ENCODE measurements at regions of chr11 and their contacts with region 1.

Region 1: DNA sequence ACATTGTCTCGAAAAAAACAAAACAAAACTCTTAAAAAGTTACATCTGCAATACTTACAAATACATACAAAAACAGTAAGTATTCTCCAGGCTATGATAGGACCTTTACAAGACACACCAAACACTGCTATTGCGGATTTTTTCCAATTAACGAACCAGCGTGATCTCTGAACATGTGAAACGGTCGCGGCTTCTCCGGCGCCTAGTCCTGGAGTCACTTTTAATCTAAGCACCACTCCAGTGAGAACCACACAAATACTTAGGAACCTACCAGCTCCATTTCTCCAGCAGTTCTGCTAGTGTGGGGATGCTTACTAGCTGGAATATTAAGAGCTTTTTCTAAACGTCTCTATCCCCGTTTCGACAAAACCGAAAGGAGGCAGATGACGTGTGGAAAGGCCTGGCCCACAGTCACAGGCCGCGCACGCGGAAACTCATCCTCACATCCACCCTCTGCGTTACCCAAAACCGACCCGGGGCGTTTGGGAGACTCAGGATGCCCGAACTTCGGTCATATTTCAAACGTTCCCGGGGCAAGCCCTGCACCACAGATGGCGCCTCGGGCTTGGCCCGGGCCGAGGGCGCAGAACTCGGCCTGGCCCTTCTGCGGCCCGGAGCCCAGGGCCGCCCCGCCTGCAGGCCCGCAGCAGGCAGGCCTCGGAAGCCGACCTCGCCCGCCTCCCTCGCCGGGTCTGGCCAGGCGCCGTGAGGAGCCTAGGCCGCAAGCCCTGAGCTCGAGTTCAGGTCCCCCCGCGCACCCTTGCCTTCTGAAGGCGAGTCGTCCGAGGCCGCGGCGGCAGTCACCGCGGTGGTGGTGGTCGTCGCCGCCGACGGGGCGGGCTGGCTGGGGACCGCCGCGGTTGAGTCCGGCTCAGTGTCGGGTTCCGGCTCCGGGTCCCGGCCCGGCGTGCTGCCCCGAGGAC is 575 bp downstream of the FNBP4 start:
- DNase-seq: peak; percentile 56 to 90 (median 68)
- ATAC-seq: peak; percentile 38
- H3K4me3 ChIP-seq: peak overlapping the region; percentile 89
- H3K4me3 Mint-ChIP-seq: peak overlapping the region; percentile 98
- H3K27ac ChIP-seq: peak overlapping the region; percentile 97 to 98
- H3K27ac Mint-ChIP-seq: peak overlapping the region; percentile 99
- H3K4me1 ChIP-seq: peaks cover 35% of the 10 kb centered on the region
- H3K4me1 Mint-ChIP-seq: peaks cover 34% of the 10 kb centered on the region
- H3K27me3 ChIP-seq: no peaks in the 10 kb centered on the region
- H3K27me3 Mint-ChIP-seq: no peaks in the 10 kb centered on the region
- CTCF ChIP-seq: no peak

Region 2: DNA sequence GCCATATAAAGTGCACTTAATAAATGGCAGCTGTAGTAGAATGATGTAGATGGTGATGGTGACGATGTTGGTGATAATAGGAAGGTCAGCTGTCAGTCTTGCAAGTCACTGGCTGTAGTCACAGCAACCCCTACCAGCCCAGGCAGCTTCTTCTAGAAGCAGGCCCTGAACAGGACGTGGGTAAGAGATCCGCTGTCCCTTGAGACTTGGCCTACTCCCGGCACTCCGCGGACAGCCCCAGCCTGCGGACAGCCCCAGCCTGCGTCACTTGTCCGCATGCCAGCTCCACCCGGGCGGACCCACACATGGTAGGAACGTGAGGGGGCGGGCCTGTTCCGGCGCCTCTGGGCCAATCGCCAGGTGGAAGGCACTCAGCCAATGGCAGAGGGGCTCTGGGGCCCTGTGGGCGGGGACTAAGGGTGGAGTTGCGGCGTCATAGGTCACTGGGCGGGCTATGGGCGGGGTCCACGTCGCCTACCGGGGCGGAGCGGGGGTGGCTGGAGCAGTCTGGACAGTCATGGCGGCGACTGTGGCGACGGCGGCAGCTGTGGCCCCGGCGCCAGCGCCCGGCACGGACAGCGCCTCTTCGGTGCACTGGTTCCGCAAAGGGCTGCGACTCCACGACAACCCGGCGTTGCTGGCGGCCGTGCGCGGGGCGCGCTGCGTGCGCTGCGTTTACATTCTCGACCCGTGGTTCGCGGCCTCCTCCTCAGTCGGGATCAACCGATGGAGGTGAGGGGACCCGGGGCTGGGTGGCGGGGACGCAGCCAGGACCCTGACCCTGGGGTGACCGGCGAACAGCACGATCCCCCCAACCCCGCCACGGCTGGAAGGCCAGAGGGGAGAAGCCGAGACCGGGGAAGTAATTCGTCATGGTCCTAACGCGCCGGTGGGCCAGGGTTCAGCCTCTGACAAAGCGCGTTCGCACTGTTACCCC is 1919.3 kb before region 1 on chr11 and contains the start of gene CRY2:
- CTCF ChIA-PET with region 1: no interaction called
- POLR2A ChIA-PET with region 1: no interaction called
- intact Hi-C with region 1: loop called in 1 of 2 experiments (anchors 5 kb)
- DNase-seq: peak; percentile 95 to 99 (median 98)
- ATAC-seq: peak; percentile 77
- H3K4me3 ChIP-seq: peak within 1 kb of the TSS; percentile 94
- H3K4me3 Mint-ChIP-seq: peak within 1 kb of the TSS; percentile 96
- H3K27ac ChIP-seq: peak within 1 kb of the TSS; percentile 91 to 93
- H3K27ac Mint-ChIP-seq: peak within 1 kb of the TSS; percentile 100
- H3K4me1 ChIP-seq: peaks cover 41% of the 10 kb centered on the region
- H3K4me1 Mint-ChIP-seq: peaks cover 70% of the 10 kb centered on the region
- H3K27me3 ChIP-seq: no peaks in the 10 kb centered on the region
- H3K27me3 Mint-ChIP-seq: no peaks in the 10 kb centered on the region
- CTCF ChIP-seq: no peak
- total RNA-seq, gene CRY2: 248 TPM

Region 3: GRCh38 chr11:47407746-47408590 is 358.6 kb before region 1 on chr11 and contains the start of gene SLC39A13:
- CTCF ChIA-PET with region 1: no interaction called
- POLR2A ChIA-PET with region 1: no interaction called
- intact Hi-C with region 1: loop called in 1 of 2 experiments (anchors 10 kb)
- DNase-seq: peak; percentile 78 to 95 (median 89)
- ATAC-seq: peak; percentile 86
- H3K4me3 ChIP-seq: peak within 1 kb of the TSS; percentile 74
- H3K4me3 Mint-ChIP-seq: peak within 1 kb of the TSS; percentile 99
- H3K27ac ChIP-seq: peak within 1 kb of the TSS; percentile 84 to 88
- H3K27ac Mint-ChIP-seq: peak within 1 kb of the TSS; percentile 95
- H3K4me1 ChIP-seq: peaks cover 40% of the 10 kb centered on the region
- H3K4me1 Mint-ChIP-seq: peaks cover 17% of the 10 kb centered on the region
- H3K27me3 ChIP-seq: no peaks in the 10 kb centered on the region
- H3K27me3 Mint-ChIP-seq: no peaks in the 10 kb centered on the region
- CTCF ChIP-seq: peak; percentile 84
- total RNA-seq, gene SLC39A13: 36.6 to 39.2 TPM

Region 4: DNA sequence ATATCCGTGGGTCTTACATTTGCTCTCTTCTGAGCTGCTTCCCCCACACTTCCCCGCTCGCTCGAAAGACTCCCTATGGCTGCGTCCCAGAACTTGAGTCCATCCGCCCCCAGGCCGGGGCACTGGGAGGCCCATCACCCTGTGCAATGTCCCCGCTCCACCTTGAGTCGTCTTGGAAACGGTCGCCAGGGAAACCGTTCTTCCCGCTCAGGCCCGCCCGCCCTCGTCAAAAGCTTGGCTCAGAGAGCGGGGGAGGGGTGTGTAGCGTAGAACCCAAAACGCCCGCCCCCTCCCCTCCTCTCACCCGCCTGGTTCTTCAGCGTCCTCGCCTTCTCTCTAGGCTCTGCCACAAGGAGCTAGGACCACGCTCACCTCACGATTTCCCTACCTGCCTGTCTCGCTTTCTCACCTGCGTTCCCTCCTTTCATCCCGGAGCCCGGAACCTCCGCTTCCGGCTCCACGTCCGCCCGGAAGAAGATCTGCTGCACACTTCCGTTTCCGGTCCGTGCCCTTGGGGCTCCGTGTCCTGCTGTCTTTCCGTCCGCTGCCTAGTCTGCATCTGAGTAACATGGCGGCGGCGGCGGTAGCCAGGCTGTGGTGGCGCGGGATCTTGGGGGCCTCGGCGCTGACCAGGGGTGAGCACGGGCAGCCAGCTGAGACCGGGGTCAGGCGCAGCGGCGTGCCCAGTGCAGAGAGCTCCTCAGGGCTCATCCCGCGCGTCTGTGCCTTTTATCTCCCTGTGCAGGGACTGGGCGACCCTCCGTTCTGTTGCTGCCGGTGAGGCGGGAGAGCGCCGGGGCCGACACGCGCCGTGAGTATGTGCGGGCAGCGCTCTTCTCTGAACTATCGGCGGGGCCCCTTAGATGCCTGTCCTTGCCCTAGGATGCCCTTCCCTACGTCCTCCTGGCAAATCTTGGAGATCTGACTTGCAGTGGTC is 187.8 kb before region 1 on chr11 and contains the starts of genes KBTBD4 and NDUFS3:
- CTCF ChIA-PET with region 1: no interaction called
- POLR2A ChIA-PET with region 1: interaction called, 6 read pairs
- intact Hi-C with region 1: loop called in 1 of 2 experiments (anchors 5 kb)
- DNase-seq: peak; percentile 81 to 95 (median 85)
- ATAC-seq: peak; percentile 91
- H3K4me3 ChIP-seq: peak within 1 kb of the TSS; percentile 90
- H3K4me3 Mint-ChIP-seq: peak within 1 kb of the TSS; percentile 99
- H3K27ac ChIP-seq: peak within 1 kb of the TSS; percentile 76 to 81
- H3K27ac Mint-ChIP-seq: peak within 1 kb of the TSS; percentile 91
- H3K4me1 ChIP-seq: peaks cover 38% of the 10 kb centered on the region
- H3K4me1 Mint-ChIP-seq: peaks cover 41% of the 10 kb centered on the region
- H3K27me3 ChIP-seq: no peaks in the 10 kb centered on the region
- H3K27me3 Mint-ChIP-seq: no peaks in the 10 kb centered on the region
- CTCF ChIP-seq: no peak
- total RNA-seq, gene KBTBD4: 29.1 to 30.2 TPM
- total RNA-seq, gene NDUFS3: 139 to 144 TPM

Region 5: GRCh38 chr11:47715082-47715669 is 51.4 kb before region 1 on chr11 and contains the start of gene AGBL2:
- CTCF ChIA-PET with region 1: no interaction called
- POLR2A ChIA-PET with region 1: interaction called, 15 read pairs
- intact Hi-C with region 1: loop called in 1 of 2 experiments (anchors 2 kb)
- DNase-seq: peak; percentile 67 to 90 (median 80)
- ATAC-seq: peak; percentile 97
- H3K4me3 ChIP-seq: peak within 1 kb of the TSS; percentile 96
- H3K4me3 Mint-ChIP-seq: peak within 1 kb of the TSS; percentile 97
- H3K27ac ChIP-seq: peak within 1 kb of the TSS; percentile 91 to 94
- H3K27ac Mint-ChIP-seq: peak within 1 kb of the TSS; percentile 93
- H3K4me1 ChIP-seq: peaks cover 13% of the 10 kb centered on the region
- H3K4me1 Mint-ChIP-seq: peaks cover 19% of the 10 kb centered on the region
- H3K27me3 ChIP-seq: no peaks in the 10 kb centered on the region
- H3K27me3 Mint-ChIP-seq: no peaks in the 10 kb centered on the region
- CTCF ChIP-seq: no peak
- total RNA-seq, gene AGBL2: 3.6 to 4.4 TPM

Region 6: DNA sequence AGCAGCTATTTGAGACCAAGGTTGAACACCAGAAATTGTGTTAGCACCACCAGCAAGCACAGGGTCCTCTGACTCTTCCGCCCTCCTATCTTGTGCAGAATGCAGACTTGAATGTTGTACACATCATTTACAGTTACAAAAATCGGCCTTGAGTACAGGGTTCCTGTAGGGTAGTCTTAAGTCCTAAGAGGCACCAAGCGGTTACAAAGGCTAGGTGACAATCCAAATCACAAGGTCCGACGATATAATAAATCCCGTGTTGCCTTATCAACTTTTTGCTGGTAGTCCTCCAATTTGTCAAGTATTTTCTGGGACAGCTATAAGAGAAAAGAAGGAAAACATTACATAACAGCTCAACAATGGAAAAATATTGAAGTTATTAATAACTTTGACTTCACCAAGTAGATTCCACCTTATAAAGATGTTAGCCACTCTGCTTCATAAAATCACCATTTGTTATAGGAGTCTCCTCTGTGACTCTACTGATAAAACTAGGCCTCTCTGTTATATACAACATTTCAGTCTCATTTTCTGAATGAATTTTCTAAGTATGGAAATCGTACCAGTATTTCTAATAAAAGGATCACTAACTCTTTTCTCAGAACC is 12.4 kb after region 1 on chr11:
- CTCF ChIA-PET with region 1: interaction called, 3 read pairs
- POLR2A ChIA-PET with region 1: interaction called, 18 read pairs
- intact Hi-C with region 1: no loop called
- DNase-seq: no peak
- ATAC-seq: no peak
- H3K4me3 ChIP-seq: no peak overlapping the region
- H3K4me3 Mint-ChIP-seq: no peak overlapping the region
- H3K27ac ChIP-seq: no peak overlapping the region
- H3K27ac Mint-ChIP-seq: no peak overlapping the region
- H3K4me1 ChIP-seq: no peaks in the 10 kb centered on the region
- H3K4me1 Mint-ChIP-seq: no peaks in the 10 kb centered on the region
- H3K27me3 ChIP-seq: no peaks in the 10 kb centered on the region
- H3K27me3 Mint-ChIP-seq: no peaks in the 10 kb centered on the region
- CTCF ChIP-seq: no peak

Region 7: GRCh38 chr11:47886096-47886495 is 119.5 kb after region 1 on chr11:
- CTCF ChIA-PET with region 1: no interaction called
- POLR2A ChIA-PET with region 1: no interaction called
- intact Hi-C with region 1: no loop called
- DNase-seq: peak in 7 of 14 experiments; percentile 1 to 64 (median 20)
- ATAC-seq: peak; percentile 37
- H3K4me3 ChIP-seq: no peak overlapping the region
- H3K4me3 Mint-ChIP-seq: peak overlapping the region; percentile 75
- H3K27ac ChIP-seq: peak overlapping the region; percentile 39 to 77
- H3K27ac Mint-ChIP-seq: peak overlapping the region; percentile 84
- H3K4me1 ChIP-seq: peaks cover 52% of the 10 kb centered on the region
- H3K4me1 Mint-ChIP-seq: peaks cover 53% of the 10 kb centered on the region
- H3K27me3 ChIP-seq: no peaks in the 10 kb centered on the region
- H3K27me3 Mint-ChIP-seq: no peaks in the 10 kb centered on the region
- CTCF ChIP-seq: no peak

Region 8: DNA sequence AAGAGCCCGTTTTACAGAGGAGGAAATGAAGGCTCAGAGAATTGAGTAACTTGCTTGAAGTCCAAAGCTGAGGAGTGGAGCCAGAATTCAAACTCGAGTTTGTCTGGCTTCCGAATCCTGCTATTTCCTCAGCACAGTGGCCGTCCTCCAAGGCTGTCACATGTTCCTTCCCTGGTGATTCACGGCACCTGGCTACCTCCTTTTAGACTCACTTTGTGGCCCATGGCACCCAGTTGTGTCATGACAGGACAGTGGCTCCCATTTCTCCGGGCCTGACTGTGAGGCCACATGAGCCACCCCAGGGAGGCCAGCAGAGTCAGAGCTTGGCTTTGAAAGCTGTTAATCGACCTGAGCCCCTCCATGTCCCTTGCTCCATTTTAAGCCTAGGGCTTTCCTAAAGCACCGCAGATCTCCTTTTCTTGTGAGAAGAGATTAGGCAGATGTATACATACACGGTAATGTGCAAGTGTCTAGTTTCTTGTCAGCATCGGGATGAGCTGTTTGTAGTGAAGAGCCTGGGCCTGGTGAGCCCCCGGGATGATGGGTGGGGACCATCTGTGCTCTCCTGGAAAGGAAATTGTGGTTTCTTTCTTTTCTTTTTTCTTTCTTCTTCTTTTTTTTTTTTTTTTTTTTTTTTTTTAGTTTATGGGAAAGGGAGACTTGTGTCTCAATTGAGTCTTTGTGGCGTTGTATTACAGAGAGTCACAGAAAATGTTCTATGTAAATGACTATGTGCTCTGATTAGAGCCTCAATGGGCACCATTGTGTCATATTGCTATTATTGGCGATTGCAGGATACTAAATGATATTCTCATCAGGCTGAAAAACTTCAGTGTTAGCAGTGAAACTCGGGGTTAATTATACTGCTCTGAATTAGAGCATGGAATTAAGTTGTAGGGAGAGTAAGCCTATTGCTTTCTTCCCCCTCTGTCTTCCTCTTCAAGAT is 268.6 kb after region 1 on chr11:
- CTCF ChIA-PET with region 1: no interaction called
- POLR2A ChIA-PET with region 1: no interaction called
- intact Hi-C with region 1: no loop called
- DNase-seq: no peak
- ATAC-seq: no peak
- H3K4me3 ChIP-seq: no peak overlapping the region
- H3K4me3 Mint-ChIP-seq: peak overlapping the region; percentile 8
- H3K27ac ChIP-seq: no peak overlapping the region
- H3K27ac Mint-ChIP-seq: peak overlapping the region; percentile 66
- H3K4me1 ChIP-seq: peaks cover 48% of the 10 kb centered on the region
- H3K4me1 Mint-ChIP-seq: peaks cover 80% of the 10 kb centered on the region
- H3K27me3 ChIP-seq: no peaks in the 10 kb centered on the region
- H3K27me3 Mint-ChIP-seq: no peaks in the 10 kb centered on the region
- CTCF ChIP-seq: no peak

Measured in CD4-positive, alpha-beta T cell (primary cell).